Activated CD4-positive, alpha-beta T cell treated with anti-CD3 and anti-CD28 coated beads for 36 hours (primary cell): ENCODE measurements at regions of chr2 and their contacts with region 1.

Region 1: DNA sequence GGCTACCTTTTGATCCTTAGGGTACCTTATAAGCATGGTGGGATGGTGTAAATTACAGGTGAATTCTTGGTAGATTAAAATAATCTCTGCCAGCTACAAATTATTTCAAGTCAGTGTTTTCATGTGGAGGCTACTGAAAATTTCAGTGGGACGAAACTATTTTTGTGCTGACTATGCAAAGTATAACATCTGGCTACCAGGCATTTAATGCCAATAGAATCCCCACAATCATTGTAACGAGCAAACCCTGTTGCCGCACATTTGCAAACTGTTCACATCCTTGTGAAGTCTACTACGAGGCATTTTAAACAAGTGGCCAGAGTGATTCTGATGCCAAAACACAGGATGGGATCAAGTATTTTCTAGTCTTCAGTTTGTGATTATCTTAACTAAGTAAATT is 48.1 kb upstream of the SDC1 start:
- DNase-seq: no peak
- ATAC-seq: no peak
- H3K4me3 Mint-ChIP-seq: no peak overlapping the region
- H3K27ac Mint-ChIP-seq: no peak overlapping the region
- H3K4me1 Mint-ChIP-seq: no peaks in the 10 kb centered on the region
- H3K27me3 Mint-ChIP-seq: no peaks in the 10 kb centered on the region

Region 2: GRCh38 chr2:20288642-20289340 is 15.7 kb after region 1 on chr2:
- CTCF ChIA-PET with region 1: interaction called, 7 read pairs
- POLR2A ChIA-PET with region 1: no interaction called
- intact Hi-C with region 1: loop called in 1 of 2 experiments (anchors 2 kb)
- DNase-seq: no peak
- ATAC-seq: no peak
- H3K4me3 Mint-ChIP-seq: no peak overlapping the region
- H3K27ac Mint-ChIP-seq: no peak overlapping the region
- H3K4me1 Mint-ChIP-seq: peaks cover 6% of the 10 kb centered on the region
- H3K27me3 Mint-ChIP-seq: no peaks in the 10 kb centered on the region